ENCODE measurements at regions of chr7 and their contacts with region 1.

Region 1: DNA sequence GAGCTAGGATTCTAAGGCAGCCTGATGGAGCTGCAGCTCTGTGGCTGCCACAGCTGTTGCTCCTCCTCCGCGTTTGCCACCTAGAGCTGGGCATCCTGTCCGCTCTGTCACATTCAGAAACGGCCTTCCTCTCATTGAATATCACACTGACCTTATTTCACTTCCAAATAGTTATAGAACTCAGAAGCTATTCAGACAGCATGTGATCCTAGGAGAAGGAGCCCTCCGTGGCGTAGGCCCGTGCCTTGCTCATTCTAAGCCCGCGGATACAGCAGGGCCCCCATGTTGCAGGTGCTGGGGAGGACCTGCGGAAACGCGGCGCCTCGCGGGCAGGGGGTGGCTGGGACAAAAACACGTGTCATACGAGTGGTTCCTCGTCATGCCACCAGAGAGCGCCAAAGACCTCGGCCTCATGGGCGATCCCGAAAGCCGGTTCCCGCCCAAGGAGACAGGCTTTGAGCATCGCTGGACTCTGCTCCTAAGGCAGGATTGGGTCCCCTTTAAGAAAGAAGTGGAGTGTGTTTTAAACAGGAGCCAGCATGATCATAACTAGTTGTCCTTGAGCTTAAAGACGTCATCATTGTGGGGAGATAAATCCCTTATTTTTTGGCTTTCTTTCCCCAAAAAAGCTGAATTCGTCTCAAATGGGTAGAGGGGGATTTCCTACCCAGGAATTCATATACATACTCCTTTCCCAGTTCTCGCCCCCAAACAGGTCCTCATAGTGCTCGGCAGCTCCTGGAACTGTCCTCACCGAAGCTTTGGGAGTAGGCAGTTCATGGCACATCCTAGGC is 17.9 kb upstream of the FIGNL1 start:
- DNase-seq: peak; percentile 88
- ATAC-seq: peak; percentile 96
- H3K4me3 Mint-ChIP-seq: peak overlapping the region; percentile 47
- H3K27ac Mint-ChIP-seq: peak overlapping the region; percentile 71
- H3K4me1 Mint-ChIP-seq: peaks cover 10% of the 10 kb centered on the region
- H3K27me3 Mint-ChIP-seq: peaks cover 4% of the 10 kb centered on the region

Region 2: DNA sequence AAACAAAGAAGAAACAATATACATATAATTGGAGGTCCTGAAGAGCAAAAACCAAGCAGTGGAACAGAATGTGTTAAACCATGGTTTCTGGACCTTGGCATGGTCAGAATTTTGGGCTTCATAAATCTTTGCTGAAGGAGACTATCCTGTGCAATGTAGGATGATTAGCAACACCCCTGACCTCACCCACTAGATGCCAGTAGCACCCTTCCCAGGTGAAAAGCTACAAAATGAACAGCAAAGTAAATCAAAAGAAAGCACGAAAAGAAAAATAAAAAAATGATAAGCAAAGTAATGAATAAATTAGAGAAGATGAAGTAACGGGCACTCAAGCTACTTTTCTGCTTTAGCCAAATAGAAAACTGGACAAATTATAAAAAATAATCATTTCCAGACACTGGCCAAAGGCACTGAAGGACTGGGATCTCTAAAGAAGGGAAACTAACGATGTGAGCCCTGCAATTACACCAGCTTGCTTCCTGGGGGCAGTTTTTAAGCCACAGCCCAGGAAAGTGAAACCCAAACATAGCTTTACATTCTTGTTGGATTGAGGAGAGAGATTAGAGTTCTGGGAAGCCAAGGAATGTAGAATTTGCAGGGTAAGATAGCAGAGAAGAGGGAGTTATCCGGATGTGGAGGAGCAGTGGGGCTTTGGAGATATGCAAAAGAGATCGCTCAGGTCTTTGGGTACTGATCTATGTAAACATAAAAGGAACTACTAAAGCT is 355.6 kb before region 1 on chr7:
- CTCF ChIA-PET with region 1: interaction called, 10 read pairs
- POLR2A ChIA-PET with region 1: no interaction called
- DNase-seq: no peak
- ATAC-seq: no peak
- H3K4me3 Mint-ChIP-seq: no peak overlapping the region
- H3K27ac Mint-ChIP-seq: no peak overlapping the region
- H3K4me1 Mint-ChIP-seq: peaks cover 2% of the 10 kb centered on the region
- H3K27me3 Mint-ChIP-seq: peaks cover 29% of the 10 kb centered on the region

Region 3: DNA sequence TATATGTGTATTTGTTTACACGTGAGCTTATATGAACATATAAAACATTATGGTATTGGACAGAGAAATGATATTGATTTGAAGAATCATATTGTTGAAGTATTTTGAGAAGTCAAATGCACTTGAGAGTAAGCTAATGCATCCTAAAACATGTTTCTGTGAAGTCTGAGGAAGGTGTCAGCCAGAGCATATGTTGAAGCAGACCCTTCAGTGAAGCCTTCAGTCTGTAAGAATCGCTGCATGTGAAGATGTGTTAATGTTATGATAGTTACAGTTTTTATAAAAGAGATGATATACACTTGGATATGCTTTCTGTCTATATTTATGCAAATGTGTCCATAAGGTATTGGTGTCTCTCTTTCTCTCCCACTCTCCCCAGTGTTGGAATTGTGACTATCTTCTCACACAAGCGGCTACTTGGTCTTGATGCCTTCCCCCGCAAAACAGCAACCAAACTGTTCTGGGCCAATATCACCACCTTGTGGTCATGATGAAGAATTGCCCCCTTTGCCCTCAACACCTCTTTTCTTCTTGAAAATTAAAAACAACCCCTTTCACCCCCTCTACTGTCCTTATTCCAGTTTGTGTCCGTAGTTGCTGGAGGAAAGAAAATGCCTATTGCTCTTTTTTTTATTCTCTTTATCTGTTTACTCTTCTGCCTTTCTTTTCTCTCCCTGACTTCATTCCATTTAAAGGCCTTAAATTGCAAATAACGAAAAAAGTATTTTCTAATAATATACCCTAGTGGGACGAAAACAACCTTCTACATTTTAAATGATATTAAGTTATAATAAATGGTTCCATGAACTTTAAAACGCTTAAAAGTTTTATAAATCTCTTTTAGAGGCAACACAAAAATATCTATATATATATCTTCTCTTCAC is 98.6 kb before region 1 on chr7:
- CTCF ChIA-PET with region 1: no interaction called
- POLR2A ChIA-PET with region 1: no interaction called
- DNase-seq: peak; percentile 76
- ATAC-seq: peak; percentile 45
- H3K4me3 Mint-ChIP-seq: peak overlapping the region; percentile 6
- H3K27ac Mint-ChIP-seq: peak overlapping the region; percentile 76
- H3K4me1 Mint-ChIP-seq: peaks cover 96% of the 10 kb centered on the region
- H3K27me3 Mint-ChIP-seq: no peaks in the 10 kb centered on the region

Region 4: GRCh38 chr7:50486512-50486911 is 18.5 kb after region 1 on chr7:
- CTCF ChIA-PET with region 1: interaction called, 10 read pairs
- POLR2A ChIA-PET with region 1: no interaction called
- DNase-seq: no peak
- ATAC-seq: no peak
- H3K4me3 Mint-ChIP-seq: no peak overlapping the region
- H3K27ac Mint-ChIP-seq: no peak overlapping the region
- H3K4me1 Mint-ChIP-seq: no peaks in the 10 kb centered on the region
- H3K27me3 Mint-ChIP-seq: peaks cover 17% of the 10 kb centered on the region

Region 5: GRCh38 chr7:50534690-50535290 is 66.8 kb after region 1 on chr7:
- CTCF ChIA-PET with region 1: no interaction called
- POLR2A ChIA-PET with region 1: no interaction called
- DNase-seq: no peak
- ATAC-seq: no peak
- H3K4me3 Mint-ChIP-seq: no peak overlapping the region
- H3K27ac Mint-ChIP-seq: no peak overlapping the region
- H3K4me1 Mint-ChIP-seq: no peaks in the 10 kb centered on the region
- H3K27me3 Mint-ChIP-seq: no peaks in the 10 kb centered on the region

Region 6: DNA sequence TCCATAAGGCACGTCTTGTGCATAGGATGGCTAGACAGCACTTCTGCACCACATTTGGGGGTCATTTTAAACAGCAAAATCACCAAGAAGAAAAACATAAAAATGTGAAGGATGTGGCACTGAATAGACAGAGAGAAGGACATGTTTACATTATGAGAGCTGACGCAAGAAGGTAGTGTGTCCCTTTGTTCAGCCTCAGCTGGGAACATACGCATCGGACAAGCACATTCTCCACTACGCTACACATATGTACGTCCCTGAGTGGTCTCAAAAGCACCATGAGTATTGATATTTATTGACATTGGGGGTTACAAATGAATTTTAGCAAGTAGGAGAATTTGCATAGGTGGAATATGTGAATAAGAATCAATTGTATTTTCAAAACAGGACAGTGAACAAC is 77.0 kb after region 1 on chr7:
- CTCF ChIA-PET with region 1: no interaction called
- POLR2A ChIA-PET with region 1: no interaction called
- DNase-seq: no peak
- ATAC-seq: no peak
- H3K4me3 Mint-ChIP-seq: no peak overlapping the region
- H3K27ac Mint-ChIP-seq: no peak overlapping the region
- H3K4me1 Mint-ChIP-seq: no peaks in the 10 kb centered on the region
- H3K27me3 Mint-ChIP-seq: peaks cover 10% of the 10 kb centered on the region

Region 7: GRCh38 chr7:50632561-50633413 is 164.8 kb after region 1 on chr7:
- CTCF ChIA-PET with region 1: interaction called, 71 read pairs
- POLR2A ChIA-PET with region 1: interaction called, 3 read pairs
- DNase-seq: peak; percentile 71
- ATAC-seq: peak; percentile 84
- H3K4me3 Mint-ChIP-seq: no peak overlapping the region
- H3K27ac Mint-ChIP-seq: no peak overlapping the region
- H3K4me1 Mint-ChIP-seq: peaks cover 6% of the 10 kb centered on the region
- H3K27me3 Mint-ChIP-seq: peaks cover 33% of the 10 kb centered on the region

Region 8: DNA sequence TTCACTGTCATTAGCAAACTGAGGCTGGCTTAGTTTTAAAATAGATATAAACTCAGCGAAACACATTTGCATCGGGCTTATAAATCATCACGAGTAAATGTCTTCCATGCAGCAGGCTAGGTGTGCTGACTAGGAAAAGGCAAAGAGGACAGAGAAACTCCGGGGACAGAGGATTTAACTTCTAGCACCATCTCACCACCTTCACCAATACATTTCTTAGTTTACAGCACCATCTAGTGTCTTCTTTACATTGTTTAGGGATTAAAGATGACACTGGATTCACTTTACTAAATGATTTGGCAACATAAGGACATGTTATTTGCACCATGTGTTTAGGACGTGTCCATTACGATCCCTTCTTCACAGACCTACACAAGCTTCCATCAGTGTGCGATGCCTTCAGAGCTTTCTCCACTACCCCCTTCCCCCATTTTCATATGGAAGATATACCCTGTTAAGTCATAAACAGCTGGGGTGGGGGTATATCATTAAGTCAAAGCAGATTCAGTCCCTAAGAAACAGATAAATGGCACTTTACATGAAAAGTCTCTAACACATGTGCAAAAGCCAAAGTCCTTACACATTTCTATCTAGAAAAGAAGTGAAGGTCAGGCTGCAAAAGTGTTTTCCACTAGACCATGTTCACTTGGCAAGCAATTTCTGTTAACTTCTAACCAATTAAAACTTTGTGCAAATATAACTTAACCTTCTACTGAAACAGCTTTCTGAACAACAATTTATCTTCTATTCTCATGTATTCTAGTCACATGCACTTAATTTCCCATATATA is 211.4 kb after region 1 on chr7:
- CTCF ChIA-PET with region 1: interaction called, 102 read pairs
- POLR2A ChIA-PET with region 1: no interaction called
- DNase-seq: no peak
- ATAC-seq: peak; percentile 83
- H3K4me3 Mint-ChIP-seq: no peak overlapping the region
- H3K27ac Mint-ChIP-seq: no peak overlapping the region
- H3K4me1 Mint-ChIP-seq: peaks cover 2% of the 10 kb centered on the region
- H3K27me3 Mint-ChIP-seq: peaks cover 6% of the 10 kb centered on the region

Region 9: GRCh38 chr7:50795831-50796230 is 327.8 kb after region 1 on chr7:
- CTCF ChIA-PET with region 1: no interaction called
- POLR2A ChIA-PET with region 1: no interaction called
- DNase-seq: no peak
- ATAC-seq: no peak
- H3K4me3 Mint-ChIP-seq: no peak overlapping the region
- H3K27ac Mint-ChIP-seq: no peak overlapping the region
- H3K4me1 Mint-ChIP-seq: peaks cover 4% of the 10 kb centered on the region
- H3K27me3 Mint-ChIP-seq: peaks cover 53% of the 10 kb centered on the region

Region 10: GRCh38 chr7:51162724-51163329 is 694.8 kb after region 1 on chr7:
- CTCF ChIA-PET with region 1: interaction called, 39 read pairs
- POLR2A ChIA-PET with region 1: no interaction called
- DNase-seq: peak; percentile 80
- ATAC-seq: peak; percentile 92
- H3K4me3 Mint-ChIP-seq: no peak overlapping the region
- H3K27ac Mint-ChIP-seq: no peak overlapping the region
- H3K4me1 Mint-ChIP-seq: no peaks in the 10 kb centered on the region
- H3K27me3 Mint-ChIP-seq: peaks cover 27% of the 10 kb centered on the region

Measured in activated CD8-positive, alpha-beta T cell treated with anti-CD3 and anti-CD28 coated beads, Interleukin-2, amount 10 ng/mL, durations not matched to agents 7 days and 5 days (primary cell).